Activated T-helper 1 cell treated with anti-CD3 and anti-CD28 coated beads, Interleukin-12 subunit alpha, Interleukin-12 subunit beta, Interleukin-2, Interleukin-4 antibody, amounts not matched to agents 30 ng/mL and 10 ng/mL and 1 ng/mL, durations not matched to agents 14 hours and 24 hours and 36 hours (primary cell): ENCODE measurements at regions of chr1 and their contacts with region 1.

Region 1: DNA sequence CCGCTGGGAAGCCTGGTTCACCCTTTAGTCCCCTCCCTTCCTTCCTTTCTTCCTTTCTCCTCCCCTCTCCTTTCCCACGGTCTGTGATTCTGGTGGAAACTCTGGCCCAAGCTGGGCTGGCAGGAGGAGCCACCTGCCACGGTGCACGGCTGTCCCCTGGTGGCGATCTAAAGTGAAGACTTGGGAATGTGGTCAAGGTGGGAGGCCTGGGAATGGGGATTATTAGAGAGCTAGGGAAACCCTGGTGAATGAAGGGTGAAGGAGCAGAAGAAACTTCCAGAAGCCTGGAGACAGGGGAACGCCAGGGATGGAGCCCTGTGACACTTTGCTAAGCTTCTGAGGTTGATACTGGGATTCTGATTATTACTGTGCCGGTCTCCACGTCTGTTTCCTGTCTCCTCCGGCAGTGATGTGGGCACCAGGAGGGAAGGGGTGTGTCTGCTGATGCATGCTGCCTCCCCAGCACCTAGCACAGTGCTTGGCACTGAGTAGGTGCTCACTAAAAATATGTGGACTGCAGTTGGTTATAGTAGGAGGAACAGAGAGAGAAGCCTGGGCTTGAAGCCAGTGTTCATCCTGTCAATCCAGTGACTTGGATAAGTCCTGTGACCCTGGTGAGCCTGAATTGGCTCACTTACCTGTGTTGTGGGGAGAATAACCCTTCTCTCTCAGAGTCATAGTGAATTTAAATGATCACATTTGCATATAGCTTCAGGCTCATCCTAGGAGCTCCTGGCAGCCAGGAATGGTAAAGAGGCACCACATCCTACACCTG is 71.2 kb upstream of the NBPF3 start:
- DNase-seq: no peak
- H3K4me3 Mint-ChIP-seq: no peak overlapping the region
- H3K27ac Mint-ChIP-seq: no peak overlapping the region
- H3K4me1 Mint-ChIP-seq: peaks cover 9% of the 10 kb centered on the region
- H3K27me3 Mint-ChIP-seq: no peaks in the 10 kb centered on the region

Region 2: DNA sequence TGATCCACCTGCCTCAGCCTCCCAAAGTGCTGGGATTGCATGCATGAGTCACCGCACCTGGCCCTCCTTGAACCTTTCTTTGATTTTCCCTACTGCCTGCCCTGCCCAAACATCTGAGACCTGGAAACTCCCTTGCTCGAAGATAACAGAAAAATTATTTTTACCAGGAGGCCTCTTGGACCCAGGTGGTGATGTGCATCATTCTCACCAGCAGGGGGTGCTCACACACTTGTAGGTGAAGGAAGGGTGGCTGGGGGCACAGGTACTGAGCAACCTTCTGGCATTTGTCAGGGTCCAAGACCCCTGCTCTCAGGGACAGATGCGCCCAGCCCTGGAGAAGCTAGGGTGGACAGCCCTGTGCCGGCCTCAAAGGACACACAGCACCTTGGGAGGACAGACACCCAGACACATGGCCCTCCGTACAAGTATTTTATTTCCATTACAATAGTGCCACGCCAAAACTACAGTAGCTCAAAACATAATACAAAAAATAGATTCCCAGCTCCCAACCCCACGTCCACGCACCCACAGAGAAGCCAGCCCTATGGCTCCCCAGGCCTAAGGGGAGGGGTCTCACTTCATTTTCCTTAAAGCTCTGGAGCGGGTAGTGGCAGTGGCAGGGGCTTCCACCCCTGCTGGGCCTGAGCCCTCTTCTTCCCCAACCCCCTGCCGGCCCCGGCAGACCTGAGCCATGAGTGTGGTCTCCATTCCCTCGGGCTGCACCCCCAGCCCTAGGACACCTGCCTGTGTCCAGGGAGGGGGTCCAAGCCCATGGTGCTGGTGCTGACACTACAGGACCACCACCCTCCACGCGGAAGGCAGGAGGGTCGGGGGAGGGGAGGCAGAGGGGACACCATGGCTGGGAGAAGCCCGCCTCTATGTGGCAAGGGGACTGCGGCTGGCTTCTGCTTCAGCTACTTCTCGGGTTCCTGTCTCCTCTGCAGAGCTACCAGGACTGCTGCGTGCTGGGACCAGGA is 151.6 kb before region 1 on chr1:
- intact Hi-C with region 1: loop called (anchors 1 kb)
- DNase-seq: peak; percentile 51
- H3K4me3 Mint-ChIP-seq: no peak overlapping the region
- H3K27ac Mint-ChIP-seq: no peak overlapping the region
- H3K4me1 Mint-ChIP-seq: no peaks in the 10 kb centered on the region
- H3K27me3 Mint-ChIP-seq: no peaks in the 10 kb centered on the region

Region 3: GRCh38 chr1:21232044-21232443 is 136.7 kb before region 1 on chr1:
- intact Hi-C with region 1: loop called (anchors 1 kb)
- DNase-seq: no peak
- H3K4me3 Mint-ChIP-seq: no peak overlapping the region
- H3K27ac Mint-ChIP-seq: peak overlapping the region; percentile 40
- H3K4me1 Mint-ChIP-seq: no peaks in the 10 kb centered on the region
- H3K27me3 Mint-ChIP-seq: no peaks in the 10 kb centered on the region

Region 4: GRCh38 chr1:21255278-21255942 is 113.3 kb before region 1 on chr1:
- intact Hi-C with region 1: loop called (anchors 1 kb)
- DNase-seq: peak; percentile 57
- H3K4me3 Mint-ChIP-seq: no peak overlapping the region
- H3K27ac Mint-ChIP-seq: peak overlapping the region; percentile 75
- H3K4me1 Mint-ChIP-seq: peaks cover 43% of the 10 kb centered on the region
- H3K27me3 Mint-ChIP-seq: no peaks in the 10 kb centered on the region

Region 5: GRCh38 chr1:21490774-21491553 is 122.3 kb after region 1 on chr1:
- intact Hi-C with region 1: loop called (anchors 2 kb)
- DNase-seq: no peak
- H3K4me3 Mint-ChIP-seq: no peak overlapping the region
- H3K27ac Mint-ChIP-seq: no peak overlapping the region
- H3K4me1 Mint-ChIP-seq: no peaks in the 10 kb centered on the region
- H3K27me3 Mint-ChIP-seq: peaks cover 4% of the 10 kb centered on the region